Colonic mucosa (tissue), 4 donors: ENCODE measurements at regions of chr4 and their contacts with region 1.

Region 1: GRCh38 chr4:72326692-72327632 is 242.1 kb downstream of the ADAMTS3 start:
- DNase-seq: no peak
- H3K4me3 ChIP-seq: no peak overlapping the region
- H3K27ac ChIP-seq: no peak overlapping the region
- H3K4me1 ChIP-seq: peaks cover 4% of the 10 kb centered on the region
- H3K27me3 ChIP-seq: no peaks in the 10 kb centered on the region
- CTCF ChIP-seq: peak; percentile 40

Region 2: GRCh38 chr4:72375073-72375736 is 48.2 kb after region 1 on chr4:
- intact Hi-C with region 1: no loop called
- DNase-seq: no peak
- H3K4me3 ChIP-seq: no peak overlapping the region
- H3K27ac ChIP-seq: no peak overlapping the region
- H3K4me1 ChIP-seq: no peaks in the 10 kb centered on the region
- H3K27me3 ChIP-seq: no peaks in the 10 kb centered on the region
- CTCF ChIP-seq: no peak

Region 3: GRCh38 chr4:72468904-72469502 is 142.0 kb after region 1 on chr4:
- intact Hi-C with region 1: loop called (anchors 2 kb)
- DNase-seq: no peak
- H3K4me3 ChIP-seq: no peak overlapping the region
- H3K27ac ChIP-seq: no peak overlapping the region
- H3K4me1 ChIP-seq: no peaks in the 10 kb centered on the region
- H3K27me3 ChIP-seq: no peaks in the 10 kb centered on the region
- CTCF ChIP-seq: peak; percentile 36